Dorsolateral prefrontal cortex (tissue), 120 donors: ENCODE measurements at regions of chr12 and their contacts with region 1.

Region 1: DNA sequence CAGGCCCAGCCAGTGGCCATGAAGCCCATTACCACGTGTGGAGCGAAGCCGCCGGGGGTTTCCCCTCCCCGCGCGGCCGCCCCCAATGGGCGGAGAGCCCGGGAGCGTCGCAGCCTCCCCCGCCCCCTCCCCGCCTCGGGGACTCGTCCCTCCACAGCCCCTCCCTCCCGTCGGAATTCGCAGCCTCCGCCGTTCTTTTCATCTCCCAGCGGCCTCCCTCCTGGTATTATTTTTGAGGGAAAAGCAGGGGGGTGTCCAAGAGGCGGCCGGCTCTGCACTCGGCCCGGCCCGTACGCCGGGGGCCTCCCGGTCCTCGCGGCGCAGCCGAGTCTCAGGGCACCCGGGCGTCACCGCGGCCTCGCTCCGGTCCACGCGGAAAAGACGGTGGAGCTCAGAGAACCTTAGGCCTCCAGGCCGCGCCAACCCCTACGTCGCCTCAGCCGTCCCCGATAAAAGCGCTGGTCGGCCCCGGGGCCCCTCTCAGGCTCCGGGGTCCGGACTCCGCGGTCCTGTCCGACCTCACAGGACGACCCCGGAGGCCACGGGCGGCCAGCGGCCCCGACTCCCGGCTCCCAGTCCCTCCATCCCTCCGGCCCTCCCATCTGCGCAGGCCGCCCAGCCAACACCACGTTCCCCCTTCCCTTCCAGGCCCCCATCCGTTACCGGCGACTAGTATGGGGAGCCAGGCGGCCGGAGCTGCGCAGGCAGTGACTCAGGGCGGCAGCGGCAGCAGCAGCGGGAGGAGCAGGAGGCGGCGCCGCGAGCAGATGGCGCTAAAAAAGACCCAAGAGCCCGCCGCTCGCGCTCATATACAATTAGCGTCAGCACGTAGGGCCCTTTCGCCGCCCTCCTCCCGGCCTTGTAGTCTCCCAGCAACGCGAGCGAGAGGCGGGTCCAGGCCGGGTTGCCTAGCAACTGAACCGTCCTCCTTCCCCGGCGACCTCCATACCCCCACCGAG is at the start of gene NAP1L1:
- DNase-seq: peak; percentile 97 to 99 (median 98)
- H3K4me3 ChIP-seq: peak within 1 kb of the TSS; percentile 57 to 99 (median 90)
- H3K27ac ChIP-seq: peak within 1 kb of the TSS; percentile 73 to 99 (median 97)
- H3K27me3 ChIP-seq: no peaks in the 10 kb centered on the region
- CTCF ChIP-seq: peak in 14 of 56 donors; percentile 4 to 32 (median 11)
- total RNA-seq, gene NAP1L1: 291 to 450 (median 373) TPM

Region 2: DNA sequence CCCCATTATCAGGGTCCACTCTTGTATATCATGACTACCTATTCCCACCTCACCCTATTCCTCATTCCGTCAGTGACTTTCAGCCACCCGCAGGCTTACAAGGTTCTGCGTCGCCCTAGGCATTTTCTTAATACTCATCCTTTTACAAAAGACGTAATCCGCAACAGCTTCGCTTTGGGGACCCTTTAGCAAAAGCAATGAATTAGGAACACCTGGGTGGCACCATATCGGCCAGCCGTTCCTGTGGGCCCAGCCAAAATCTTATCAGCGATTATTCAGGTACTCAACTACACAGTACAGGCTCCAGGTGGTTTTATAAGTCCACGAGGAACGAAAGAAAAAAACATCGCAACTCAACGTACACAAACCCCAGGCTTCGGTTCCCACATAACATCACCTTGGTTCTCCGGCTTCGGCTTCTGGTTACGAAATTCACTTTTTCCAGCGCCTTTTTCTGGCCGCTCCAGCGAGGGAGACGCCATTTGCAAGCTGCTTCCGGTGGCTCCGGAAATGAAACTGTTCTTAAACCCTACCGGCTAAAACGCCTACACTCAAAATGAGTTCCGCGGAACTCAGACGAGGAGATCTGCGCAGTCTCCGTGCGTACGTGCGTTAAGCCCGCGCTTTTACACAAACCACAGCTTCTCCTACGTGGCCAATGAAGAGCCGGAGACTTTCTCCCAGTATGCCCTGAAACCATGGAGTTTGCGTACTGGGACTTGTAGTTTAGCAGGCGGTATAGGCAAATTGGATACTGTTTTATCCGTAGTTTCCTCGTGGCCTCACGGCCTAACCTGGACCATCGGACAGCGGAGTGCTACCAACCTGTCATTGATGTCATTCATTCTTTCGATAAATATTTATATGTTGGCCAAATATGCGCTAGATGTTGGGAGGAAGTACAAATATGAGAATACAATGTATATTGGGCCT is 572.8 kb before region 1 on chr12 and contains the start of gene KRR1:
- intact Hi-C with region 1: loop called in 1 of 2 experiments (anchors 1 kb)
- DNase-seq: peak; percentile 88 to 98 (median 95)
- H3K4me3 ChIP-seq: peak within 1 kb of the TSS; percentile 65 to 100 (median 89)
- H3K27ac ChIP-seq: peak within 1 kb of the TSS in 54 of 59 donors; percentile 14 to 86 (median 76)
- H3K27me3 ChIP-seq: no peaks in the 10 kb centered on the region
- CTCF ChIP-seq: peak in 44 of 56 donors; percentile 6 to 68 (median 36)
- total RNA-seq, gene KRR1: 35.1 to 68.2 (median 51.2) TPM

Region 3: DNA sequence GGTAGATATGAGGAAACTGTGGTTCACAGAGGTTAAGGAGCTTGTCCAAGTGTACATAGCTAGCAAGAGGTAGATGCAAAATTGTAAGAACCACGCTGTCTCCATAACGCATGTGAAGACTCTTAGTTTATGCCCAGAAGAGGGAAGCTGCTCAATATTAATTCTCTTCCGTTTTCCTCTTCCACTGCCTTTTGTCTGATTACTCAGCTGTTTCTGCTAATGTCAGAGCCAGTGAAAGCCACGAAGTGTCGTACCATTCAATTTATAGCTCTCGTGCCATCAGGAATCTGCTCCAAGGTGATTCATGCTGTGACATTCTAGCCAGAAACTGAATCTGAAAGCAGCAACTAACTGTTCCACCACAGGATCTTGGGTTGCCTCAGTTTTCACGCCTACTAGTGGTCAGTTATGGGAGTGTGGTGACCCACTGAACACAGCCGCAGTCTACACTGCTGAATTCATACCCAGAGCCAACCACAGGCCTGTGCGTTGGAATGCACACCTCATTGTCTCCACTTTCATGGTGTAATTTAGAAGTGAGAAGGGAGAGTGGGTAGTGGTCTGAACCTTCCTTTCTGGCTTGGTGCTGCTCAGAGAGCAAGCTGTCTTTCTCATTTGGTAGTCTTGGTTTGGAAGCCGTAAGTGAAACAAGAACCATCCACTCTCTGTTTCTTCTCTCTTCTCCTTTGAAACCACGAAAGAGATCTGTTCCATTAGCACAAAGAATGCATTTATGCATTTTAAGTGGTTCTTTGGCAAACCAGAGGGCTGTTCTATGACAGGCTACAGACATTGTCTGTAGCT is 74.5 kb after region 1 on chr12:
- intact Hi-C with region 1: loop called in 1 of 2 experiments (anchors 10 kb)
- DNase-seq: peak in 6 of 10 donors; percentile 18 to 54 (median 49)
- H3K4me3 ChIP-seq: peak overlapping the region in 42 of 59 donors; percentile 2 to 47 (median 24)
- H3K27ac ChIP-seq: peak overlapping the region in 46 of 59 donors; percentile 2 to 81 (median 45)
- H3K27me3 ChIP-seq: no peaks in the 10 kb centered on the region
- CTCF ChIP-seq: peak in 55 of 56 donors; percentile 26 to 75 (median 60)